ENCODE measurements at regions of chr1 and their contacts with region 1.

Region 1: GRCh38 chr1:31705080-31705866 is 1.5 kb upstream of the COL16A1 start:
- DNase-seq: peak; percentile 68
- ATAC-seq: peak; percentile 54
- H3K4me3 ChIP-seq: peak overlapping the region; percentile 54 to 69 (median 55)
- H3K27ac ChIP-seq: peak overlapping the region; percentile 57
- H3K4me1 ChIP-seq: peaks cover 72% of the 10 kb centered on the region
- H3K27me3 ChIP-seq: peaks cover 2 to 18% of the 10 kb centered on the region in 2 experiments; a peak in 3 of 5 replicates
- CTCF ChIP-seq: peak; percentile 93
- EP300 ChIP-seq: no peak
- POLR2A ChIP-seq: no peak
- RAD21 ChIP-seq: peak; percentile 88

Region 2: DNA sequence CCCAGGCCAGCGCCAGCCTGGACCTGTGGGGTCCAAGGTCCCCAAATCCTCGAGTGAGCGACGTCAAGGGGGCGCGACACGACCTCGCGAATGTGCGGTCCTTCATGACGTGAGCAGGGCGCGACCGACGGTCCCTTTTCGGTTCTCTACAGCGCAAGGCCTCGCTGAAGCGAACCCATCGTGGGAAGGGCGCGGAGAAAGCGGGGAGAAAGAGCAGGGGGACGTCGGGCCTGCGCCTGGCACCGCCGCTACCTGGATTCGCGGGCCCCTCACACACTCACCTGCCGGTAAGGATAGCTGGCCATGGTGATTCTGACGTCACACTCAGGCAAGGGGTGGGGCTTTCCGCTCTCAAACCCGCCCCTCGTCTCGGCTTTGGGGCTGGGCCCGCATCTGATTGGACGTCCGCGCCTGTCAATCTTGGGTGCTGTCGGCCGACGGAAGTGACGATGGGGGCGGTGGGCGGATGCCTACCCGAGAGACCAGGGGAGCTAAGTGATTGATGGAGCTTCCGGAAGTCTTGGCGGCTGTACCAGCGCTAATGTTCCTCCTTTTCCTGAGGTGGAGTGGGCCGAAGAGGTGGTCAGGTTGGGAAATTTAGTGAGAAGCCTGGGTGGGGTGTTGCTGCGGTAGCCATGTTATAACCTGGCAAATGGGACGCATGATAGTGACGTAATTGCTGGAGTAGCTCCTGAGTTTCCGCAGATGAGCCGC is 60.6 kb before region 1 on chr1 and contains the start of gene PEF1:
- CTCF ChIA-PET with region 1: no interaction called
- POLR2A ChIA-PET with region 1: interaction called, 20 read pairs
- in situ Hi-C with region 1: no loop called
- intact Hi-C with region 1: no loop called
- DNase-seq: peak; percentile 94
- ATAC-seq: peak; percentile 89
- H3K4me3 ChIP-seq: peak within 1 kb of the TSS; percentile 72 to 87 (median 84)
- H3K27ac ChIP-seq: peak within 1 kb of the TSS; percentile 89
- H3K4me1 ChIP-seq: peaks cover 67% of the 10 kb centered on the region
- H3K27me3 ChIP-seq: no peaks in the 10 kb centered on the region; a peak in 1 of 5 replicates
- CTCF ChIP-seq: peak; percentile 2; the same call in 1 of the 2 replicates
- EP300 ChIP-seq: 0 out of 4 replicates have a peak, but pooled peaks of 1 of the 2 experiments have one; percentile 54
- POLR2A ChIP-seq: peak; percentile 12 to 74; a peak in 3 of 4 replicates
- RAD21 ChIP-seq: no peak; the same call in 1 of the 2 replicates
- total RNA-seq, gene PEF1: 57.1 and 85.7 TPM in 2 replicates

Region 3: DNA sequence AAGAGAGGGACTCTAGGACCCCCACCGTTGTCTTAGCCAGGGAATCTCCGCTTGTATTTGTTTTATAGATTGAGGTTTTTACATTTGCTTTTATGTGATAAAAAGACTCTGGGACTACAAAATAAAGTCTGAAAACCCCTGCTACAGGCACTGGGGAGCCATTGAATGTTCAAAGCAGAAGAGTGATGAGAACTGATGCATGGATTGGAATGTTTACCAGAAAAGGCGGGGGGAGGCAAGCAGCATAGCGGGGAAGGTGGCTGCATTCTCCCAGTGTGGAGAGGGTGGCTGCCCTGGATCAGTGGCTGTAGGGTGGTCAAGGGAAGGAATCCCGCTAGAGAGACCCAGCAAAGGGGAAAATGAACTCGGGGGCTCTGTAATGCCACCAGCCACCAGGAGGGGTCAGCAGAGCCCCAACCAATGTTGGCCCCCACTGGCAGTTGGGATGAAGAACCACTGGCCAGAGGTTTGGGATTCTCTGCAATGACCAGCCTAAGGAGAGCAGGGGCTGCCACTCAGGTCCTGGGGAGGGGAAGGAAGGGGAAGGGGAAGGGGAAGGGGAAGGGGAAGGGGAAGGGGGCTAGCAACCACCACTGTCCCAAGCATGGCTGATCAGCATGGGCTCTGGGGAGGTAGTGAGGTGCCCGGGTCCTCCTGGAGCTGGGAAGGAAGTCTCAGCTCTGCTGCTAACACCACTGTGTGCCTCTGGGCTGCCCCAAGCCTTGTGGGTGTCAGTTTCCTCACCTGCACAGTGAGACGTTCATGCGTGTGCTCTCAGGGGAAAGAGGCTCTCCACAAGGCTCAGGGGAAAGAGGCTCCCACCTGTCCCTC is 41.4 kb before region 1 on chr1:
- CTCF ChIA-PET with region 1: interaction called, 22 read pairs
- POLR2A ChIA-PET with region 1: interaction called, 24 read pairs
- in situ Hi-C with region 1: loop called (anchors 5 kb)
- intact Hi-C with region 1: loop called (anchors 1 kb)
- DNase-seq: peak; percentile 28
- ATAC-seq: peak; percentile 54
- H3K4me3 ChIP-seq: no peak overlapping the region
- H3K27ac ChIP-seq: no peak overlapping the region
- H3K4me1 ChIP-seq: peaks cover 10% of the 10 kb centered on the region
- H3K27me3 ChIP-seq: no peaks in the 10 kb centered on the region
- CTCF ChIP-seq: peak; percentile 93
- EP300 ChIP-seq: no peak
- POLR2A ChIP-seq: no peak
- RAD21 ChIP-seq: peak; percentile 95

Region 4: GRCh38 chr1:31669786-31670592 is 35.3 kb before region 1 on chr1:
- CTCF ChIA-PET with region 1: no interaction called
- POLR2A ChIA-PET with region 1: interaction called, 24 read pairs
- in situ Hi-C with region 1: loop called (anchors 5 kb)
- intact Hi-C with region 1: no loop called
- DNase-seq: no peak
- ATAC-seq: no peak
- H3K4me3 ChIP-seq: no peak overlapping the region
- H3K27ac ChIP-seq: no peak overlapping the region
- H3K4me1 ChIP-seq: peaks cover 10% of the 10 kb centered on the region
- H3K27me3 ChIP-seq: no peaks in the 10 kb centered on the region
- CTCF ChIP-seq: no peak
- EP300 ChIP-seq: no peak
- POLR2A ChIP-seq: no peak
- RAD21 ChIP-seq: no peak